Sigmoid colon (tissue), 7 donors: ENCODE measurements at regions of chr9 and their contacts with region 1.

Region 1: GRCh38 chr9:89000973-89001916 is 10.0 kb downstream of the S1PR3 start:
- DNase-seq: peak; percentile 94
- H3K4me3 ChIP-seq: peak overlapping the region in 2 of 4 donors; percentile 20 to 23
- H3K27ac ChIP-seq: peak overlapping the region; percentile 7 to 98 (median 58)
- H3K4me1 ChIP-seq: peaks cover 0 to 58% (median 42%) of the 10 kb centered on the region in 4 donors
- H3K27me3 ChIP-seq: no peaks in the 10 kb centered on the region
- CTCF ChIP-seq: peak; percentile 74 to 86 (median 80)
- EP300 ChIP-seq: no peak
- POLR2A ChIP-seq: no peak

Region 2: GRCh38 chr9:88106491-88106890 is 894.8 kb before region 1 on chr9:
- intact Hi-C with region 1: loop called (anchors 10 kb)
- DNase-seq: no peak
- H3K4me3 ChIP-seq: no peak overlapping the region
- H3K27ac ChIP-seq: no peak overlapping the region
- H3K4me1 ChIP-seq: no peaks in the 10 kb centered on the region
- H3K27me3 ChIP-seq: no peaks in the 10 kb centered on the region
- CTCF ChIP-seq: peak in 3 of 4 experiments; percentile 59 to 65 (median 62)
- EP300 ChIP-seq: no peak
- POLR2A ChIP-seq: no peak

Region 3: DNA sequence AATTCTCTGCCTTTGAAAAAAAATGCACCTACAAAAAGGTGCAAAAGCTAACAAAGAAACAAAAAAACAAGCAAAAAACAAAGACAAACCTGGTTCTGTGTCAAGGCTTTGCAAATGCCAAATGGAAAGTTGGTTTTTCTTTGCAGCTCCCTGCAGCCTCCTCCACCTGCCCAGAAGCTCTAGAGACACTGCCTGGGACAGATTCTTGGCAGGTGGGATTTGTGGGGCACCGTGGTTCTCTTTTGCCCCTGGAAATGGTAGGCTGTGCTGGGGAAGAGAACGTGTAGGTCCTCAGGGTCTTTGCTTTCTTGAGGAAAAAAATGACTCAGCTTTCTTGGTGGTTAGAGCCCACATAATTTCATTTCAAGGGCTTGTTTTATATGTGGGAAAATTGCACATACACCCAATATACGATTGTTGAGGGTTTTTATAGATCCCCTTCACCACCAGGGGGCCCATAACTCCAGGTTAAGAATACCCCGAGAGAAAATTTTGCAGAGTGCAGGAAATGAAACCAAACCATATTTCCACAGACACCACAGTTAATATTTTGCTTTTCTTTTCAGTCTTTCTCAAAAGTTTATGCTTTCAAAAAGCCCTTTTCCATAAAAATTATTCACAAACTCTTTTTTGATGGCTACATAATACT is 407.6 kb before region 1 on chr9:
- intact Hi-C with region 1: loop called (anchors 1 kb)
- DNase-seq: no peak
- H3K4me3 ChIP-seq: no peak overlapping the region
- H3K27ac ChIP-seq: no peak overlapping the region
- H3K4me1 ChIP-seq: no peaks in the 10 kb centered on the region
- H3K27me3 ChIP-seq: no peaks in the 10 kb centered on the region
- CTCF ChIP-seq: peak; percentile 54 to 67 (median 65)
- EP300 ChIP-seq: no peak
- POLR2A ChIP-seq: no peak

Region 4: GRCh38 chr9:88651682-88652633 is 349.3 kb before region 1 on chr9:
- intact Hi-C with region 1: loop called (anchors 5 kb)
- DNase-seq: peak; percentile 96
- H3K4me3 ChIP-seq: no peak overlapping the region
- H3K27ac ChIP-seq: peak overlapping the region; percentile 58 to 68 (median 64)
- H3K4me1 ChIP-seq: peaks cover 0 to 20% (median 12%) of the 10 kb centered on the region in 4 donors
- H3K27me3 ChIP-seq: no peaks in the 10 kb centered on the region
- CTCF ChIP-seq: no peak
- EP300 ChIP-seq: no peak
- POLR2A ChIP-seq: no peak

Region 5: GRCh38 chr9:88672874-88673689 is 328.2 kb before region 1 on chr9:
- intact Hi-C with region 1: no loop called
- DNase-seq: no peak
- H3K4me3 ChIP-seq: no peak overlapping the region
- H3K27ac ChIP-seq: no peak overlapping the region
- H3K4me1 ChIP-seq: no peaks in the 10 kb centered on the region
- H3K27me3 ChIP-seq: no peaks in the 10 kb centered on the region
- CTCF ChIP-seq: no peak
- EP300 ChIP-seq: no peak
- POLR2A ChIP-seq: no peak

Region 6: DNA sequence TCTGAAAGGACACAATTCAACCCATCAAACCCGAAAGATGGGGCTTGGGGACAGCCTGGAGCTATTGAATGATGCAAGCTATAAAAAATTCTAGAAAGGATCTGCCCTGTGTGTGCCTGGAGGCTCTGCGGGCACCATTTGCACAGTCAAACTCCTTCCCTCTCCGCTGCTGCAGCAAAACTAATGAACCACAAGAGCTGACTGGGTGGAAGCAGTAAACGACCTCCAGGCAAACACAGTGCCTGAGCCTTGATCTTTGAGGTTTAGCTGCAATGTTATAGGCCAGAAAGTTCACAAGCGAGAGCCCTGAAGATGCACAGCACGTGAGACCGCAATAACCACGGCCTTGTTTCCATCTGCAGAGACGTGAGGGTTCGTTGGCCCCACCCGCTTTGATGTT is 79.2 kb before region 1 on chr9:
- intact Hi-C with region 1: no loop called
- DNase-seq: no peak
- H3K4me3 ChIP-seq: no peak overlapping the region
- H3K27ac ChIP-seq: no peak overlapping the region
- H3K4me1 ChIP-seq: peaks cover 0 to 5% (median 0%) of the 10 kb centered on the region in 4 donors
- H3K27me3 ChIP-seq: no peaks in the 10 kb centered on the region
- CTCF ChIP-seq: no peak
- EP300 ChIP-seq: no peak
- POLR2A ChIP-seq: no peak

Region 7: DNA sequence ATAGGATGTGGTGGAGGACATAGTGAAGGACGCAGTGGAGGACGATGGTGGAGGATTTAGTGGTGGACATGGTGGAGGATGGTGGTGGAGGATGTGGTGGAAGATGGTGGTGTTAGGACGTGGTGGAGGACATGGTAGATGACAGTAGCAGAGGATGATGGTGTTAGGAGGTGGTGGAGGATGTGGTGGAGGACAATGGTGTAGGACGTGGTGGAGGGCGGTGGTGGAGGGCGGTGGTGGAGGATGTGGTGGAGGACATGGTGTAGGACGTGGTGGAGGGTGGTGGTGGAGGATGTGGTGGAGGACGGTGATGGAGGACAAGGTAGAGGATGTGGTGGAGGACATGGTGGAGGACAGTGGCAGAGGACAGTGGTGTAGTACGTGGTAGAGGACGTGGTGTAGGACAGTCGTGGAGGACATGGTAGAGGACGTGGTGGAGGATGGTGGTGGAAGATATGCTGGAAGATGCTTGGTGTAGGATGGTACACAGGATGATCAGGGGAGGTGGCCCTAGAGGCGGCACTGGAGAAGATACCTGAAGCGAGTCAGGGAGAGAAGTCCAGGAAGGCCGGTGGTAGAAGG is 58.8 kb after region 1 on chr9:
- intact Hi-C with region 1: no loop called
- DNase-seq: no peak
- H3K4me3 ChIP-seq: no peak overlapping the region
- H3K27ac ChIP-seq: no peak overlapping the region
- H3K4me1 ChIP-seq: no peaks in the 10 kb centered on the region
- H3K27me3 ChIP-seq: no peaks in the 10 kb centered on the region
- CTCF ChIP-seq: no peak
- EP300 ChIP-seq: no peak
- POLR2A ChIP-seq: no peak

Region 8: DNA sequence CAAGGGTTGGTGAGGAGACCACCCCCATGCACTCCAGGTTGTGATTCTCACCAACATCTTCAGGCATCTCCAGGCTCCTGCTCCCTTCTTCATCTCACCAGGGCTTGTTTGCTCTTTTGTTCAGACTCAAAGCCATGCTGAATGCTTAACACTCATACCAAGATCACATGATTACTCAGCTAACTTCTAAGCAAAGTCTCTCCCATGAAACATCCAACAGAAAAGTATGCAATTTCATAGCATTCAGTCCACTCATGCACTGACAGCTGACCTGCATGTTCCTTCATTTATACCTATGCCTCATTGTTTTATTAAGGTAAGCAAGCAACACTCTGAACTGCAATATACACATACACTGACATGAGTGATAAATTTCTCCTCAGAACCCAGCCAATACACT is 108.4 kb after region 1 on chr9:
- intact Hi-C with region 1: no loop called
- DNase-seq: no peak
- H3K4me3 ChIP-seq: no peak overlapping the region
- H3K27ac ChIP-seq: no peak overlapping the region
- H3K4me1 ChIP-seq: no peaks in the 10 kb centered on the region
- H3K27me3 ChIP-seq: no peaks in the 10 kb centered on the region
- CTCF ChIP-seq: no peak
- EP300 ChIP-seq: no peak
- POLR2A ChIP-seq: no peak